ENCODE measurements at regions of chr20 and their contacts with region 1.

Region 1: GRCh38 chr20:1313236-1313964 is 15.5 kb downstream of the SDCBP2 start:
- DNase-seq: peak; percentile 80
- ATAC-seq: peak; percentile 83
- H3K4me3 Mint-ChIP-seq: peak overlapping the region; percentile 57
- H3K27ac Mint-ChIP-seq: no peak overlapping the region
- H3K4me1 Mint-ChIP-seq: no peaks in the 10 kb centered on the region; the same call in 1 of the 2 replicates
- H3K27me3 Mint-ChIP-seq: peaks cover 37% of the 10 kb centered on the region
- CTCF ChIP-seq: peak; percentile 98

Region 2: GRCh38 chr20:1301031-1301529 is 12.3 kb before region 1 on chr20:
- CTCF ChIA-PET with region 1: interaction called, 28 read pairs
- POLR2A ChIA-PET with region 1: no interaction called
- DNase-seq: no peak
- ATAC-seq: peak; percentile 68
- H3K4me3 Mint-ChIP-seq: no peak overlapping the region
- H3K27ac Mint-ChIP-seq: peak overlapping the region; percentile 73
- H3K4me1 Mint-ChIP-seq: peaks cover 8% of the 10 kb centered on the region
- H3K27me3 Mint-ChIP-seq: peaks cover 3% of the 10 kb centered on the region; the same call in 1 of the 2 replicates
- CTCF ChIP-seq: no peak

Region 3: DNA sequence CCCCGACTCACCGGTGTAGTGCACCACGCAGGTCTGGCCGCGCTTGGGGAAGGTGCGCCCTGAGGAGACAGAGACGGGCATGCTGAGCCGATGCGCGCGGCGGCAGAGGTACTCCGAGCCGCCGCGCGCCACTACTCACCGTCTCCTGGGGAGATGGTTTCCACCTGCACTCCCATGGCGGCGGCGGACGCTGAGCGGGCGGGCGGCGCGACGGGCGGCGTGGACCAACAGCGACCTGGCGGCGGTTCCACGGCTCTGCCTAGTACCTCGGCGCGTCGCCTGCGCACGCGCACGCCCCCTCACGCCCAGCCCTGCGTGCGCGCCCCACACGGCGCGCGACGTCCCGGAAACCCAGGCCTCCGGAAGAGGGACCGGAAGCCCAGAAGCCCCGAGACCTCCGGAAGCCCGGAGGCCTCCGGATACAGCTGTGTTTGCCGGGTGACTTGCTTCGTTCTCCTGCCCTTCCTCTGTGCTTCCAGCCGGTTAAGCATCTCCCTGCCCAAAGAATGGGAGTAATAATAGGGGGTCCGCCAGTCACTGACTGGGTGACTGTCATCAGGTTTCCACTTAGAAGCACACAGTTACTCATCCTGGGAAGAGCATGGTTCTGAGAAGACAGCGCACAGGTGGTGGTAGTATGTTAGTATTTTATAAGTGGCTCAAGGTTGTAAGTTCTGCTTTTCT is 79.6 kb after region 1 on chr20 and contains the start of gene FKBP1A:
- CTCF ChIA-PET with region 1: interaction called, 20 read pairs
- POLR2A ChIA-PET with region 1: no interaction called
- DNase-seq: peak; percentile 74
- ATAC-seq: peak; percentile 80
- H3K4me3 Mint-ChIP-seq: peak within 1 kb of the TSS; percentile 89
- H3K27ac Mint-ChIP-seq: peak within 1 kb of the TSS; percentile 83
- H3K4me1 Mint-ChIP-seq: peaks cover 47% of the 10 kb centered on the region
- H3K27me3 Mint-ChIP-seq: peaks cover 42% of the 10 kb centered on the region
- CTCF ChIP-seq: no peak
- total RNA-seq, gene FKBP1A: 197 to 218 TPM (median 201 TPM) in 3 replicates

Region 4: DNA sequence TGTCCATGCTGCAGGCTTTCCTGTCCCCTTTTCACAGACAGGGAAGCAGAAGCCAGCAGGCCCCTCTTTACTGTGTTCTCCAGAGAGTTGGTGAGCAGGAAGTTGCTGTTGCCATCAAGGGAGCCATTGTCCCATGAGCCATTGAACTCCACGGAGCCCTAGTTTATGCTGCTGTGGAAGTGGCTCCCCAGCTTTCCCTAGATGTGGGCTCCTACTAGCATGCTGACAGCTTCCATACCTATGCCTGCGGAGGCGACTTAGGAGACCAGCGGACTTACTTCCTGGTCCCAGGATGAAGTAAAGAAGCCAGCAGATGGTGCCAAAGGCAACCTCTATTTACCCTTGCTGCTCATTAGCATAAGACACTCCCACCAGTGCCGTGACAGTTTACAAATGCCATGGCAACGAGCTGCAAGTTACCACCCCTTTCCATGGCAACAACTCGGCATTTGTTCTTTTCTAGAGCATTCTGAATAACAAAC is 110.3 kb after region 1 on chr20:
- CTCF ChIA-PET with region 1: interaction called, 10 read pairs
- POLR2A ChIA-PET with region 1: no interaction called
- DNase-seq: peak; percentile 81
- ATAC-seq: peak; percentile 85
- H3K4me3 Mint-ChIP-seq: no peak overlapping the region
- H3K27ac Mint-ChIP-seq: no peak overlapping the region
- H3K4me1 Mint-ChIP-seq: peaks cover 35% of the 10 kb centered on the region
- H3K27me3 Mint-ChIP-seq: peaks cover 5% of the 10 kb centered on the region; the same call in 1 of the 2 replicates
- CTCF ChIP-seq: no peak

Region 5: DNA sequence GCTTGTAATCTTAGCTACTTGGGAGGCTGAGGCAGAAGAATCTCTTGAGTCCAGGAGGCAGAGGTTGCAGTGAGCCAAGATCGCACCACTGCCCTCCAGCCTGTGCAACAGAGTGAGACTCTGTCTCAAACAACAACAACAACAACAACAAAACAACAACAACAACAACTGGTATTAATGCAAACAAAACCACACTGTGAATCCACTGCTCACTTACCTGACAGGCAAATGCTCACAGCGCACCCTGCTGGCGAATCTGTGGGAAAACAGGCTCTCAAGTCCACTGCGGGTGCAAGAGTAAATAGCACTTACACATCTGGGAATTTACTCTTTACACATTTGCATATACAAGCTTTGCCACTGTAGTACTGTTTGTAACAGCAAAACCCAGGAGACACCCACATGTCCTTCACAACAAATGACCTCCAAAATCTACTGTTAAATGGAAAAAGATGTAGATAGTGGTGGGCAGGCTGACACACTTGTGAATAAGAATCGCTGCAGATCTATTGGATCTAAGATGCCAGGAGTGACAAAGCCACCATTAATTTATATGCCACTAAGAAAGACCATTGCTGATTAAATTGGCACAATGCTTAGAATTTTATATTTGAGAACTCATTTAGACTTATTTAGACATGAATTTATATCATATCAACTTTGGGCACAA is 124.0 kb after region 1 on chr20:
- CTCF ChIA-PET with region 1: interaction called, 26 read pairs
- POLR2A ChIA-PET with region 1: interaction called, 3 read pairs
- DNase-seq: peak; percentile 82
- ATAC-seq: peak; percentile 56; the same call in 1 of the 2 replicates
- H3K4me3 Mint-ChIP-seq: no peak overlapping the region
- H3K27ac Mint-ChIP-seq: peak overlapping the region; percentile 29; the same call in 1 of the 2 replicates
- H3K4me1 Mint-ChIP-seq: peaks cover 13% of the 10 kb centered on the region
- H3K27me3 Mint-ChIP-seq: no peaks in the 10 kb centered on the region
- CTCF ChIP-seq: peak; percentile 76

Region 6: DNA sequence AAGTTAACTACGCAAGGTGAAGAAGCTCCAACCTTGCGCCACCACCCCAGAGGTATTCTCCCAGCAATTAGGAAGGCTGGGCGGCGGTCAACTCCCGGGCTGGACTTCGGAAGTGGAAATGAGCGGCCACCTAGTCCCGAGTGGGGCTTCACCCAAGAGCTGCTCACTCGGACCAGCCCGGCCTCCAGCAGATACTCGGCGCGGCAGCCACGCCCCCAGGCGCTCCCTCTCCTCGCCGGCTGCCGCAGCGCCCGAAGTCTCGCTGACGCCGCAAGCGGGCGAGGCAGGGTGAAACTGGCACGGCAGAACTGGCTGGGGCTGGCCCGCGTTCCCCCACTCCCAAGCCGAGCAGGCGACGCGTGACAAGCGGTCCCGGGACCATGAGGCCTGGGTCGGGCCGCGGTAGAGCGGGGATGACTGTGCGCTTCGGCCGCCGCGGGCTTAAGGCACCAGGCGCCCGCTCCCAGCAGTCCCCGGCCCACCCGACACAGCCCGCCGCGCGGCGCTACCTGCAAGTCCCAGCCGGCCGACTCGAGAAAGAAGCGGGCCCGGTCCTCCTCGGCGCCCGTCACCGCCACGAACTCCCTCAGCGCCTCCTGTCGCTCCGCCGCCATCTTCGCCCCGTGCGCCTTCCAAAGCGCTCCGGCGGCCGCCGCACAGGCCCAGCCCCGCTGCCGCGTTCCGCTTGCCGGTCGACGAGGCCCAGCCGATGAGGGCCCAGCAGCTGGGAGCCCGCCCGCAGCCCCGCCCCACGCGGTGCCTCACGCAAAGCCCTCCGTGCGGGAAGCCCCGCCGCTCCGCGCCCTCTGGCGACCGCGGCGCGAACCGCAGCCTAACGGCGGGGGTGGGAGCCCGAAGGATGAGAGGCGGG is 153.0 kb after region 1 on chr20 and contains the start of gene NSFL1C:
- CTCF ChIA-PET with region 1: interaction called, 13 read pairs
- POLR2A ChIA-PET with region 1: no interaction called
- DNase-seq: peak; percentile 98
- ATAC-seq: peak; percentile 91
- H3K4me3 Mint-ChIP-seq: peak within 1 kb of the TSS; percentile 85
- H3K27ac Mint-ChIP-seq: peak within 1 kb of the TSS; percentile 53; the same call in 1 of the 2 replicates
- H3K4me1 Mint-ChIP-seq: peaks cover 27% of the 10 kb centered on the region
- H3K27me3 Mint-ChIP-seq: peaks cover 4% of the 10 kb centered on the region
- CTCF ChIP-seq: peak; percentile 91
- total RNA-seq, gene NSFL1C: 76.7 to 85.5 TPM (median 83.2 TPM) in 3 replicates

Region 7: GRCh38 chr20:1503564-1504227 is 190.3 kb after region 1 on chr20:
- CTCF ChIA-PET with region 1: interaction called, 14 read pairs
- POLR2A ChIA-PET with region 1: no interaction called
- DNase-seq: peak; percentile 81
- ATAC-seq: peak; percentile 92
- H3K4me3 Mint-ChIP-seq: no peak overlapping the region
- H3K27ac Mint-ChIP-seq: no peak overlapping the region
- H3K4me1 Mint-ChIP-seq: peaks cover 18% of the 10 kb centered on the region
- H3K27me3 Mint-ChIP-seq: peaks cover 33% of the 10 kb centered on the region
- CTCF ChIP-seq: peak; percentile 53